ENCODE measurements at regions of chr2 and their contacts with region 1.

Region 1: DNA sequence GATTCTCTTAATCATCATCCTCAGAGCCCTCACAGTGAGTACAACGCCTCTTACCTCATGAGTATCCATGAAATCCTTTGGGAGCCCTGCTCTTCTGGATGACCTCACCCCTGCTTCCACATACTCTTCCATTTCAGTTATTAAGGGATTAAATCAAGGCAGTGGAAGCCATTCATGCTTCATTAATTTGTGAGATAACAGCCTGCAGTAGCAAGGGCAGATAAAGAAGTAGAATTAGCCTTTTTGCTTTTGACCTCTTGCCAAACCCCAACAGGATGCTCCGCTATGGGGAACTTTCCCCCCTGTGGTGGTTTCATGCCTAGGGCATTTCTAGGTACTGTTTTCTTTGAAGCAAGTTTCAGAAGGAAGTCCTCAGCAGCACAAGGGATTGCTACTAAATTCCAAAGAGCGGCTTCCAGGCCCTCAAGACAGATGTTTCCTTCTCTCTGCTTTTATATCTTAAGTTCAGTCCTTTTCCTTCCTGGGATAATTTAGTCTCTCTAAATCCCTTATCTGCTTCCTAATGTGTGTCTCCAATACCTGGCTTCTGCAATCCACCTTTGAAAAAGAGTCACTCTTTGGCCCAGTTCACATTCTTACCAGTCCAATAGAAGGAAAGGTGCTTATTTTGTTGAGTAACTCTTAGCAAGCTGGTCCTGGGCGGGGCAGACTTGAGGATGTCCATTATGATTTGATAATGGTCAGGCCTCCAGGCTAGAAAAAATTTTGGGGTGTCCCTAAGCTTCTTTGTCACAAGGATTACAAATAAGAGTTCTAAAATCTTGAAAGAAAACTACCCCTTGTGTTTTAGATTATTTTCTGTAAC is 76.9 kb downstream of the MYO1B start:
- DNase-seq: no peak
- ATAC-seq: no peak
- H3K4me3 ChIP-seq: no peak overlapping the region
- H3K27ac ChIP-seq: no peak overlapping the region
- H3K4me1 ChIP-seq: peaks cover 4 to 9% of the 10 kb centered on the region in 2 donors
- H3K27me3 ChIP-seq: no peaks in the 10 kb centered on the region

Region 2: GRCh38 chr2:191245046-191245868 is 76.8 kb before region 1 on chr2 and contains the start of gene MYO1B:
- intact Hi-C with region 1: no loop called
- DNase-seq: peak; percentile 74 to 92
- ATAC-seq: peak; percentile 83
- H3K4me3 ChIP-seq: peak within 1 kb of the TSS; percentile 72 to 88
- H3K27ac ChIP-seq: peak within 1 kb of the TSS in 1 of 2 donors; percentile 41
- H3K4me1 ChIP-seq: peaks cover 0 to 2% of the 10 kb centered on the region in 2 donors
- H3K27me3 ChIP-seq: no peaks in the 10 kb centered on the region
- total RNA-seq, gene MYO1B: 61.1 to 86.4 TPM

Region 3: DNA sequence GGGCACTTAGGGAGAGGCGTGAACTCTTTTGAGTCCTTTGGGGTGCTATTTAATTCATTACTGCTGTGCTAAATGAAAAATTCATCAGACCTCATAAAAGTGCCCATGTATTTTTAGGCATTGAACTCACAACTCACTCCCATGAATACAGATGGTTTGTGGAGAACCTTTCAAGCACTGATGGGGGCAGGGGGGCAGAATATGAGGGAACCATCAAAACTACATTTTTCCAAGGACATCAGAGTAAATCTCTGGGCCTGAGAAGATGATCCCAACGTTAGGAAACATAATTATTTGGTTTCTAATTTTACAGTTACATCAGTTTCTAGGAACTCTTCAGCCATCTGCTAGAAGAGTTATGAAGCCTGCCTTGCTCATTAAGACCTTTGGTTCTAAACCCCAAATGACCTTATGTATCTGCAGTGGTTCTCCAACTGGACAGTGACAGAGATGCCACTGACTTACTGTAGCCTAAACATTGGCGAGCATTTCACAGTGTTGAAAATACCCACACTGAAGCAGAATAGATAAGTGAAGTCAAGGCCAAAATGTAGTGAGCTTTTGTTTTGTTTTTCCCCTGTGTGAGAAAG is 13.9 kb after region 1 on chr2:
- intact Hi-C with region 1: loop called in 1 of 2 experiments (anchors 2 kb)
- DNase-seq: no peak
- ATAC-seq: no peak
- H3K4me3 ChIP-seq: no peak overlapping the region
- H3K27ac ChIP-seq: no peak overlapping the region
- H3K4me1 ChIP-seq: peaks cover 0 to 4% of the 10 kb centered on the region in 2 donors
- H3K27me3 ChIP-seq: no peaks in the 10 kb centered on the region